Calu3 (cell line): ENCODE measurements at regions of chr4 and their contacts with region 1.

Region 1: DNA sequence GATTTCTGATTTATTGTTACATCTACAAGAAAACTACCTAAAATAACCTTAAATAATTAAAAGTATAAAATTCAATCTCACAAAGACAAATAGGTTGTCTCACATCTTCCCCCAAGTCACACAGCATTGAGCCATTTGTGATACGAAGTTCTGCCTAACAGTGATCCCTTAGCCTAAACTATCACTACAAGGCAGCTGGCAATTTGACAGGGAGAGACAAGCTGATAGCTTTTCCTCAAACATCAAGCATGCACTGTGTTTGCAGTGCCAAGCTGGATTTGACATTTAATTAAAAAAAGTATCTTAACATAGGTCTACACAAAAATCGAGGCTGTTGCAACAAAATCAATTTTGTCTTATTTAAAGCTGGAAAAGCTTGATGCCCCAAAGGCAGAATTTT is 464.7 kb upstream of the TRAM1L1 start:
- DNase-seq: no peak
- H3K4me3 Mint-ChIP-seq: no peak overlapping the region
- H3K27ac Mint-ChIP-seq: no peak overlapping the region
- H3K4me1 Mint-ChIP-seq: no peaks in the 10 kb centered on the region
- H3K27me3 Mint-ChIP-seq: no peaks in the 10 kb centered on the region
- CTCF ChIP-seq: no peak

Region 2: GRCh38 chr4:117324851-117325491 is 225.1 kb before region 1 on chr4:
- CTCF ChIA-PET with region 1: no interaction called
- intact Hi-C with region 1: loop called (anchors 10 kb)
- DNase-seq: peak; percentile 53
- H3K4me3 Mint-ChIP-seq: peak overlapping the region; percentile 56
- H3K27ac Mint-ChIP-seq: peak overlapping the region; percentile 95
- H3K4me1 Mint-ChIP-seq: peaks cover 28% of the 10 kb centered on the region
- H3K27me3 Mint-ChIP-seq: no peaks in the 10 kb centered on the region
- CTCF ChIP-seq: no peak